RWPE1 (cell line): ENCODE measurements at regions of chr10 and their contacts with region 1.

Region 1: DNA sequence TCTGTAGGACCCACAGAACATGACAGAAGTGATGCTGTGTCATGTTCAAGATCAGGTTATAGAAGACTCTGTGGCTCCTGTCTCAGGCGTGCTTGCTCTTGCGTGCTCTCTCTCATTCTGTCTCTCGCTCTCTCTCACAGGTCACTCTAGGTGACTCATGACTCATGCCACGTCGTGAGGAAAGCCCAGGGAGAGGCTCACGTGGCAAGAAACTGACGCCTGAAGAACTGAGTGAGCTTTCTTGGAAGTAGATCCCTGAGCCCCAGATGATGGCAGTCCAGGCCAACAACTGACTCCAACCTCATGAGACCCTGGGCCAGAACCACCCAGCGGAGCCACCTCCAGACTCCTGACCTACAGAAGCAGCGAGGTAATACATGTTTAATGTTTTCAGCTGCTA is 103.3 kb downstream of the DNMBP start:
- DNase-seq: peak; percentile 97
- H3K27ac ChIP-seq: peak overlapping the region; percentile 79
- CTCF ChIP-seq: peak; percentile 60

Region 2: DNA sequence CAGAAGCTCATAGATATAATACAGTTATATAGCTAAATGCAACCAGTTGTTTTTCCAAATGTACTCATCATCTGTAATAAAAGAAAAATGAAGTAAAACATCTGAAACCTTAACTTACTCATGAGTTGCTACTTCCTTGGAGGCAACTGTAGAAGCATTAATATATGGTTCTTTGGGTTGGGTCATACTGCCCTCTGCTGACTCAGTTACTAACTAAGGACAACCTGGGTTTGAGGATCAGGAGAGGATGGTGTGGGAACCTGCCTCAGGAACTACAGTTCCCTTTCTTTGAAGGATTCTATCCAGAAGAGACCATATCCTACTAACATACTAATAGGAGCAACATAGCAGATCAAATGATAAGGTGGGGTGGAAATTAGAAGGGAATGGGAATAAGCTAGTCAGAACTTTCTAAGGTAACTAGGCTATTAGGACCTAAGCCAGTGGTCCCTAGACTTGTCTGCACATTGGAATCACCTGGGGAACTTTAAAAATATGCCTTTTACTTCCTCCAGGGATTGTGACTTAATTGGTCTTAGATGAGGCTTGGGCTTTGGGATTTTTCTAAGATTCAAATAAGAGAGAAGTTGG is 195.2 kb before region 1 on chr10:
- CTCF ChIA-PET with region 1: no interaction called
- POLR2A ChIA-PET with region 1: no interaction called
- DNase-seq: peak; percentile 50
- H3K27ac ChIP-seq: no peak overlapping the region
- CTCF ChIP-seq: peak; percentile 69

Region 3: DNA sequence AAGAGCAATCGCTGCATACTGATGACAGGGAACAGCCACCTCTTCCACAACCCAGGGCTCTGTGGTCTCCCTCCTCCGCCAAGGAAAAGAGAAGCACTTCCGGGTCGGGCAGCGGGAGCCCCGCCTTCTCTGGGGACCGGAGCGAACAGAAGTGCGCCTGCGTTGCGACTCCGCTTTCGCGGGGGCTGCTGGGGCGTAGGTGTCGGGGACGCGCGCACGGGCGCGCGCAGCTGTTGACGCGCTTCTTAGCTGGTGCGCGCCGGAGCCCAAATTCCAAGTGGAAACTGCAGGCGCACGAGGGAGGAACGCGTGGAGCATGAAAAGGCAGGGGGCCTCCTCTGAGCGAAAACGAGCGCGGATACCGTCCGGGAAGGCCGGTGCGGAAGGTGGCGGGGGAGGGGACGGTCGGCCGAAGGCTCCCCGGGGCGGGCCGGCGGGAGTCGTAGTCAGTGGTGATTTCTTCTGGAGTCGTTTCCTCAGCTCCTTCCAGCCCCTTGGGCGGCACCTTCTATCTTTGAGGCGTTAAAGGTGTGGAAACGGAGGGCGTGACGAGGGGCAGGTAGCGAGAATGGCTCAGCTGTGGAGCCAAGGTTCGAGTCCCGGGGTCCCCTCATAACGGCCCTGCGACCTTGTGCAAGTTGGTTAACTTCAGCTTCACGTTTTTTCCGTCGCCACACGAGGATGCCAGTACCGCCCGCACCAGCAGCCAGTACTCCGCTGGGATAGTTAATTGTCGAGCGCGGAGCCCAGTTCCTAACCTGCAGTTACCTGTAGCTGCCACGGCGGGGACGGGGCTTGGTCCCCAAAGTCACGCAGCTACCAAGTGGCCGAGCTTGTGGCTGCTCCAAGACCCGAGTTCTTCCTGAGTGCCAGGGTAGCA is 174.2 kb before region 1 on chr10 and contains the starts of genes COX15 and CUTC:
- CTCF ChIA-PET with region 1: no interaction called
- POLR2A ChIA-PET with region 1: no interaction called
- DNase-seq: peak; percentile 97
- H3K27ac ChIP-seq: peak within 1 kb of the TSS; percentile 96
- CTCF ChIP-seq: peak; percentile 50

Region 4: DNA sequence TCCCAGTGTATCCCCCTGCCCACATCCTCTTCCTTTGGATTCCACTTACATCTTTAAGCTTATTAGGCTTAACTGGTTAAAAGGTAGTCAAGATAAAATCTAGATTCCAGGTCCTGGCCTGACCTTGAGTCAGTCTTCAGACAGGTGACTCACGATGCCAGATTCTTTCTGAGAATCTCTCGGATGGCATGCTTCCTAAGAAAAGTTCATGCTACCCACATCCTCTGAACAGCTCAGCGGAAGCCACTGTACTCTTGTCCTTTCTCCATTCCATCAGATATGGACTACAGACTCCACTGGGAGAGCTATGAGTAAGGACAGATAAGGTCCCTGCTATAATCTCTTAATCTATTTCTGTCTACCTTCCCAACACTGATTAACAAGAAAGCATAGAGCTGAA is 59.8 kb after region 1 on chr10:
- CTCF ChIA-PET with region 1: interaction called, 10 read pairs
- POLR2A ChIA-PET with region 1: no interaction called
- DNase-seq: peak; percentile 86
- H3K27ac ChIP-seq: peak overlapping the region; percentile 74
- CTCF ChIP-seq: no peak

Region 5: GRCh38 chr10:100046021-100046486 is 139.6 kb after region 1 on chr10:
- CTCF ChIA-PET with region 1: interaction called, 44 read pairs
- POLR2A ChIA-PET with region 1: interaction called, 4 read pairs
- DNase-seq: peak; percentile 77
- H3K27ac ChIP-seq: peak overlapping the region; percentile 49
- CTCF ChIP-seq: peak; percentile 93